Activated naive CD4-positive, alpha-beta T cell treated with anti-CD3 and anti-CD28 coated beads, Interleukin-2, amount 10 ng/mL, durations not matched to agents 7 days and 5 days (primary cell): ENCODE measurements at regions of chr7 and their contacts with region 1.

Region 1: DNA sequence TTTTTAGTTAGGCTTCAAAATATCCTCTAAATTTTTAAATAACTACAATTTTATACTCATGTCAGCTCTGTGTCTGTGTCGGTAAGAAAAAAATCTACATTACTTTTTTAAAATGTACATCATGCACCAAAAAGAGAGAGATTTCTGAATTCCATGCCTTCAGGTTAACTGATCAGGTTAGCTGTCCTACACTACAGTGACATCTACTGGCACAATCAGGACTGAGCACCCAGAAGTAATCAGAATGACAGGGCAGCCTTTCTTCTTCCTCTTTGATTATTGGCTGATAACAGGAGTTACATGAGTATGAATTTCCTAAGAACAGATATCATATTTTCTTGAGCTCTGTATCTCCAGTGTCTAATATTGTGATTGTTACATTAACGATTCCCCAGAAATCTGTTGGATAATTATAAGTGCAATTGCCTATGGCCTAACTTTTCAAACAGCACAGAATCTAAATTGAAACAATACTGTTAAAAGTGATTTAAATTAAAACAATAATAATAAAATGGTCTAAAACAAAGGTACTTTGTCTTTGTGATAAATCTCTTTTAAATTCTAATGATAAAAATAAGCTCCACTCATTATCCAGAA is 41.8 kb upstream of the HYCC1 start:
- DNase-seq: peak; percentile 75
- H3K4me3 Mint-ChIP-seq: no peak overlapping the region
- H3K27ac Mint-ChIP-seq: no peak overlapping the region
- H3K4me1 Mint-ChIP-seq: no peaks in the 10 kb centered on the region
- H3K27me3 Mint-ChIP-seq: peaks cover 10% of the 10 kb centered on the region

Region 2: GRCh38 chr7:22726345-22727185 is 329.1 kb before region 1 on chr7:
- CTCF ChIA-PET with region 1: interaction called, 27 read pairs
- DNase-seq: peak; percentile 76
- H3K4me3 Mint-ChIP-seq: peak overlapping the region; percentile 77
- H3K27ac Mint-ChIP-seq: peak overlapping the region; percentile 88
- H3K4me1 Mint-ChIP-seq: peaks cover 68% of the 10 kb centered on the region
- H3K27me3 Mint-ChIP-seq: peaks cover 38% of the 10 kb centered on the region

Region 3: GRCh38 chr7:22855049-22855392 is 200.7 kb before region 1 on chr7:
- CTCF ChIA-PET with region 1: interaction called, 12 read pairs
- DNase-seq: no peak
- H3K4me3 Mint-ChIP-seq: peak overlapping the region; percentile 94
- H3K27ac Mint-ChIP-seq: peak overlapping the region; percentile 93
- H3K4me1 Mint-ChIP-seq: peaks cover 36% of the 10 kb centered on the region
- H3K27me3 Mint-ChIP-seq: peaks cover 17% of the 10 kb centered on the region

Region 4: GRCh38 chr7:22992874-22993840 is 62.5 kb before region 1 on chr7:
- CTCF ChIA-PET with region 1: interaction called, 15 read pairs
- DNase-seq: peak; percentile 26
- H3K4me3 Mint-ChIP-seq: no peak overlapping the region
- H3K27ac Mint-ChIP-seq: no peak overlapping the region
- H3K4me1 Mint-ChIP-seq: peaks cover 36% of the 10 kb centered on the region
- H3K27me3 Mint-ChIP-seq: no peaks in the 10 kb centered on the region

Region 5: GRCh38 chr7:23043441-23043840 is 12.2 kb before region 1 on chr7:
- CTCF ChIA-PET with region 1: interaction called, 14 read pairs
- DNase-seq: no peak
- H3K4me3 Mint-ChIP-seq: no peak overlapping the region
- H3K27ac Mint-ChIP-seq: no peak overlapping the region
- H3K4me1 Mint-ChIP-seq: no peaks in the 10 kb centered on the region
- H3K27me3 Mint-ChIP-seq: peaks cover 4% of the 10 kb centered on the region